ENCODE measurements at regions of chr7 and their contacts with region 1.

Region 1: DNA sequence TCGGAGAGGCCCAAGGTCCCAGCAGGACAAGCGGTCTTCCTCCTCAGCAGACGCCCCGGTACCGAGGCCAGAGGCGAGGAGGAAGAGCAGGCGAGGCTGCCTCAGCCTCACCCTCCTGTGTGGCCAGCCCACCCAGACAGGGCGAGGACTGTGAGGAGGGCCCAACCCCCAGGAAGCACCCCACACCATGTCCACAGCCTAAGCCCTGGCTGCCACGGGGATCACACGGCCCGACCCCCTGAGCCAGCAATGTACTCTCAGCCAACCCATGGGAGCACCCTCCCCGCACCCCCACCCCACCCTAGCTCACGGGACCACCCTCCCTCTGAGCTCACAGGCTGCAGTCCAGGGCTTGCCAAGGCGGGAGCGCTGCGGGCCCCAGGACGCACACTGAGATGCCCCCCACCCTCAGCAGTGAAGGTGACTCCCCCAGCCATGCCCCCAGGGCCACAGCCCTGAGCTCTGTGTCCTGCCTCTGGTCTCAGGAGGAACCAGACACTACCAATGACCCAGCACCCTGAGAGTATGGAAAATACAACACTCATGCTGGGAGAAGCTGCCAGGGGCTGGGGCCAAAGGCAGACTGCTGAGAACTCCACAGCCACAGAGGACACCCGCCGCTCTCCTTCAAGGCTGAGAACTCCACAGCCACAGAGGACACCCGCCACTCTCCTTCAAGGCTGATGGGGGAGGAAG is 93.6 kb downstream of the MAD1L1 start:
- DNase-seq: no peak
- H3K4me3 ChIP-seq: no peak overlapping the region
- H3K27ac ChIP-seq: no peak overlapping the region
- H3K4me1 ChIP-seq: no peaks in the 10 kb centered on the region
- CTCF ChIP-seq: no peak

Region 2: DNA sequence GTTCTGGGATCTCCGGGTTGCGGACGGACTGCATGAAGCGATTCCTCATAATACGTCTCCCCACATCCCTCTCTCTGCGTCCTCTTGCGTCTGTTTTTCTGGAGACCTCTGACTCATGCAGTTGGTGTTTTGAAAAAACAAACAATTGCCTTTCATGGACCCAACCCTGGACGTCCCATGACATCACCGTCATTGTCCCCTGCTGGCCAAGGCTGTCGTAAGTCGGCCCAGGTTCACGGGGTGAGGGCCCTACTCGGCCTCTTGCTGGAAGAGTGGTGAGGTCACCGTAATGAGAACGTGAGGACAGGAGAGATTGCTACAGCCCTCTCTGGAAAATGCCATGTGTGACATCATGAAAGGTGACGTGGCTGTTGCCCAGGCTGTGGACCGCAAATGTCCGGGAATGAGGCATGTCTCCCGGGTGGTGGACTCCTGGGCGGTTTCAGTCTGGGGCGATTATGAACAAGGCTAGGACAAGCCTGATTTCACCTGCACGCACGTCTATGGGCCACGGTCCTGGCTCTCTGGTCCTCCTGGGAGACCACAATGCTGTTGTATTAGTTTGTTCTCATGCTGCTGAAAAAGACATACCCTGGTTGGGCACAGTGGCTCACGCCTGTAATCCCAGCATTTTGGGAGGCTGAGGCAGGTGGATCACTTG is 618.4 kb before region 1 on chr7:
- CTCF ChIA-PET with region 1: no interaction called
- POLR2A ChIA-PET with region 1: no interaction called
- intact Hi-C with region 1: no loop called
- DNase-seq: no peak
- H3K4me3 ChIP-seq: no peak overlapping the region
- H3K27ac ChIP-seq: no peak overlapping the region
- H3K4me1 ChIP-seq: peaks cover 12% of the 10 kb centered on the region
- CTCF ChIP-seq: no peak

Region 3: GRCh38 chr7:2069472-2069860 is 69.7 kb before region 1 on chr7:
- CTCF ChIA-PET with region 1: interaction called, 10 read pairs
- POLR2A ChIA-PET with region 1: no interaction called
- intact Hi-C with region 1: no loop called
- DNase-seq: peak; percentile 11
- H3K4me3 ChIP-seq: no peak overlapping the region
- H3K27ac ChIP-seq: peak overlapping the region; percentile 24
- H3K4me1 ChIP-seq: peaks cover 54% of the 10 kb centered on the region
- CTCF ChIP-seq: no peak

Region 4: DNA sequence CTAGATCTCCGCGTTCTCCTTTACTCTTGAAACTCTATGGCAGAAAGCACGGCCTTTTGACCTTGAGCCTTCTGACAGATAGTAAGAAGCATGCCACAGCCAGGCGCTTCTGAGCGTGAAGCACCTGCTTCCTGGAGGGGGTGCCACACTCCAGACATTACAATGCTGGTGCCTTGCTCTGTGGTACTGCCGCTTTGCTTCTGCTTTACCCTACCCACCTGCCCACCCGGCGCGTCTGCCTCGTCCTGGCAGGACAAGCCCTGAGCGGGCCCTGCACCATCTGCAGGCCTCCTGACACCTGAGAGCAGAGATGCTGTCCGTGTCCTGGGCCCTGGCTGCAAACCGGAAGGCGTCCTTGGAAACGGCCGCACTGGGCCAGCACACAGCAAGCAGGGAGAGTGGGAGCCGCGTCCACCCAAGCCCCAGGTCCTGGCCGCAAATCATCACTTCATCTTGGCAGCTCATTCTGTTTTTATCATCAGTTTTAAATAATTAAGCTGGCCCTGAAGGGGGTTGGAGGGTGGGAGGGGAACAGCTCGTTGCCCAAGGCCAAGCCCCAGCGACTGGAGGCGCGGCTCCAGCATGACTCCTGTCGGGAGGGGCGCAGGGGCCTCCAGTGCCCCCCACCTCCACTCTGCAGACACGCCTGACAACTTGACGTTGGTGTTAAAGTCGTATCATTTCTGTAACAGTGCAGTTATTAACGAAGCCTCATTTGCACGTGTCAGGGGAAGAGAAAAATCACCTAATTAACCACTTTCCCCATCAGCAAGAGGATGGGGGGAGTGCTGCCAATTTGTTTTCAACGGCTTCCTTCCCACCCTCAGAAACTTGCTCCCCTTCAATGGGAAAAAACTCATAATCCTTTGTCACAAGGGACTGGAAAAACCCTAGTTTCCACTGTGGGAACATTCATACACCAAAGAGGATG is 38.6 kb before region 1 on chr7:
- CTCF ChIA-PET with region 1: no interaction called
- POLR2A ChIA-PET with region 1: no interaction called
- intact Hi-C with region 1: no loop called
- DNase-seq: peak; percentile 91
- H3K4me3 ChIP-seq: peak overlapping the region; percentile 33
- H3K27ac ChIP-seq: peak overlapping the region; percentile 83
- H3K4me1 ChIP-seq: peaks cover 47% of the 10 kb centered on the region
- CTCF ChIP-seq: peak; percentile 71

Region 5: DNA sequence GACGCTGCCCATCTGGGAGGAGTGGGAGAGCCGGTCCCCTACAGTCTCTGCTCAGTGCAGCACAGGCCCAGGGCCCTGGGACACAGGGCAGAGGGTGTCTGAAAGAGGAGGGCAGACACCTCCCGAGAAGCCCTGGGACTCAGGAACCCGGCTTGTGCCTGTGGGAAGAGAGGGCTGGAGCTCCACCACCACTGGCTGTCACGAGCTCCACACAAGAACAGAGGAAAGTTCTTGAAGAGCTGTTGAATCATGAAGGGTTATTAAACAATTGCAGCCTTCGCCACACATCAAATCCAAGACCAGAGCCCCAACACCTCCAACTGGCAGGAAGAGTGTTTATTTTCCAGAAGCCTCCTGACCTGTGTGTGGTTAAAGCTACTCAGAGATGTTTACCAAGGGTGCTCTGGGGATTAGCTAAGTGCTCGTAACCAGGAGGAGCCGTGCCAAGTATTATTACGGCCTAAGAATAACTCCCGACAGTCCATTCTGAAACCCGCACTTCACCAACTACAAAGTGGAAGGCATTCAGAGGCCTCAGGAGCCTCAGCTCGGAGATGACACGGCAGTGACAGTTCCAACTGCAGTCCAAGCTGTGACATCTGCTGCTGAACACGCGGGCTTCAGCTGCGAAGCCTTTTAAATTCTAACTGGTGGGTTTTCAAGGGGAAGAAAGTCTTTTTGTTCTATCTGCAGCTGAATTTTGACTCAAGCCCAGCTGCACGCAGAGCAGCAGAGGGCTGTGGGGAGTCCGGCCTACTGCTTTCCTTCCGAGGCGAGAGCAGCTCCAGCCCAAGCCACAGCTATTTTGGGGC is 18.5 kb after region 1 on chr7:
- CTCF ChIA-PET with region 1: no interaction called
- POLR2A ChIA-PET with region 1: no interaction called
- intact Hi-C with region 1: no loop called
- DNase-seq: peak; percentile 38
- H3K4me3 ChIP-seq: no peak overlapping the region
- H3K27ac ChIP-seq: peak overlapping the region; percentile 21
- H3K4me1 ChIP-seq: peaks cover 18% of the 10 kb centered on the region
- CTCF ChIP-seq: no peak

Region 6: DNA sequence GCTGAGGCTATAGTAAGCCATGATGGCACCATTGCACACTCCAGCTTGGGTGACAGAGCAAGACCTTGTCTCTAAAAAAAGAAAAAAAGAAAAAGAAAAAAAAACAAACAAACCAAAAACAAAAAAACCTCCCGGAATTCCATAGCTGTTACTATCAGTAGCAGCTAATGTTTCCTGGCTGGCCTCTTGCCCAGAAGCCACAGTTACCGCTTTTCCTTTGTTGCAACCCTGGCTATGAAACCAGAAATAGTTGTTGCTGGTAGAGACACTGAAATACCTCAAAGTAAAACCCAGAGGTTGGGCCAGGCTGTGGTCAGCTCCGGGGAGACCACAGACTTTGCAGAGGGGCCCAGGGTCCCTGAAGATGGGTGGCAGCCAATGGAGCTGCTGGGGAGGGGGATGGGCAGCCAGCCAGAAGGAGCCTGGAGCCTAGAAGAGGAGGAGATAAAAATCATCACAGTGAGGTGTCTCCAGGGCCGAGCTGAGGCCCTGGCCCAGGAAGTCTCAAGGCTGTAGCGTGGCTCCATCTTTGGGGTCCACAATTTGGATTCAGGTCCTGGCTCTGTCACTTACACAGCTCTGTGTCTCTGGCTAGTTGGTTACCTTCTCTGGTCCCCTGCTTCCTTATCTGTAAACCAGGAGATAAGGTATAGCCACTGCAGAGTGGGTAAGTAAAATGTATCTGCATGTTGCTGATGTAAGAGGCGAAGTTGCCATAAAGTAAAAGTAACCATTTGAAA is 260.9 kb after region 1 on chr7:
- CTCF ChIA-PET with region 1: no interaction called
- POLR2A ChIA-PET with region 1: no interaction called
- intact Hi-C with region 1: no loop called
- DNase-seq: no peak
- H3K4me3 ChIP-seq: no peak overlapping the region
- H3K27ac ChIP-seq: peak overlapping the region; percentile 37
- H3K4me1 ChIP-seq: peaks cover 20% of the 10 kb centered on the region
- CTCF ChIP-seq: no peak

Measured in OCI-LY7 (cell line).